ENCODE measurements at regions of chr2 and their contacts with region 1.

Region 1: GRCh38 chr2:194867328-194867727 is 789.7 kb upstream of the SLC39A10 start:
- DNase-seq: no peak
- ATAC-seq: no peak

Region 2: GRCh38 chr2:194938066-194938465 is 70.7 kb after region 1 on chr2:
- intact Hi-C with region 1: loop called (anchors 2 kb)
- DNase-seq: no peak
- ATAC-seq: no peak

Region 3: GRCh38 chr2:195343942-195344530 is 476.7 kb after region 1 on chr2:
- intact Hi-C with region 1: no loop called
- DNase-seq: no peak
- ATAC-seq: no peak